ENCODE measurements at regions of chr19 and their contacts with region 1.

Region 1: DNA sequence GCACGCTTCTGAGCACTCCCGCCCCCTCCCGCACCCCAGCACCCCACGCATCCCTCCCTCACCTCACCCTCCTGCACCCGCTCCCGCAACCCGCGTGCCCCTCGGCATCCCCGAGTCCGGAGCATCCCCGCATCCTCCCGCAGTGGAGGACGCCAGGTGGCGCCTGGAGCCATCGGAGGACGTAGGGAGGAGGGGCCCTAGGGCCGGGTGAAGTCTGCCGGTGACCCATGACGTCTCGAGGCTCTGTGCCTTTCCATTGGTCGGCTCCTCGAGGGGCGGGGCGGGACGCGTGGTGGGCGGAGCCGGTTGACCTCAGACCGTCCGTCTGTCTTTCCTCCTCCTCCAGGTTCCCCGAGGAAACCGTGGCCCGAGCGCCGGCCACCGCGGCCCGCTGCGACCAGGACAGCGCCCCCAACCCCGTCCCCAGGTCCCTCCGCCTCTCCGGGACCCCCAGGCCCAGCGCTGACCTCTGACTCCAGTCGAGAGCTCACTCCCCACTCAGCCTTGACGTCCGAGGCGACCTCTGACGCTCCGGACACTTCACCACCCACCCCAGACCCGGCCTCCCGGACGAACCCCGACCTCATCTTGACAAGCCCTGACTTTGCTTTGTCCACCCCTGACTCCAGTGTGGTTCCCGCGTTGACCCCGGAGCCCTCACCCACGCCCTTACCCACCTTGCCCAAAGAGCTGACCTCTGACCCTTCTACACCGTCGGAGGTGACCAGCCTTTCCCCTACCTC is 19.9 kb downstream of the SBK2 start:
- DNase-seq: peak; percentile 90 to 94
- H3K4me3 ChIP-seq: peak overlapping the region; percentile 34 to 55
- H3K27ac ChIP-seq: peak overlapping the region; percentile 66 to 73
- H3K4me1 ChIP-seq: peaks cover 0 to 10% (median 5%) of the 10 kb centered on the region in 4 donors
- H3K27me3 ChIP-seq: peaks cover 0 to 19% of the 10 kb centered on the region in 2 donors
- CTCF ChIP-seq: peak; percentile 80 to 94

Region 2: GRCh38 chr19:55605637-55606470 is 88.8 kb after region 1 on chr19 and contains the start of gene ZNF865:
- intact Hi-C with region 1: loop called (anchors 2 kb)
- DNase-seq: peak; percentile 67 to 85
- H3K4me3 ChIP-seq: peak within 1 kb of the TSS; percentile 92 to 96
- H3K27ac ChIP-seq: peak within 1 kb of the TSS; percentile 95
- H3K4me1 ChIP-seq: peaks cover 3 to 49% (median 32%) of the 10 kb centered on the region in 4 donors
- H3K27me3 ChIP-seq: no peaks in the 10 kb centered on the region
- CTCF ChIP-seq: peak; percentile 49 to 55

Region 3: GRCh38 chr19:55624109-55625003 is 107.3 kb after region 1 on chr19 and contains the start of gene ZNF784:
- intact Hi-C with region 1: loop called (anchors 5 kb)
- DNase-seq: peak; percentile 91 to 95
- H3K4me3 ChIP-seq: peak within 1 kb of the TSS; percentile 59 to 61
- H3K27ac ChIP-seq: peak within 1 kb of the TSS; percentile 89 to 93
- H3K4me1 ChIP-seq: peaks cover 0 to 14% (median 6%) of the 10 kb centered on the region in 4 donors
- H3K27me3 ChIP-seq: no peaks in the 10 kb centered on the region
- CTCF ChIP-seq: no peak